ENCODE measurements at regions of chr6 and their contacts with region 1.

Region 1: GRCh38 chr6:70436320-70436719 is 23.0 kb downstream of the FAM135A start:
- DNase-seq: no peak
- ATAC-seq: no peak
- H3K4me3 ChIP-seq: no peak overlapping the region
- H3K27ac ChIP-seq: no peak overlapping the region
- H3K4me1 ChIP-seq: no peaks in the 10 kb centered on the region
- H3K27me3 ChIP-seq: no peaks in the 10 kb centered on the region
- CTCF ChIP-seq: no peak
- POLR2A ChIP-seq: no peak

Region 2: GRCh38 chr6:70241991-70242420 is 194.3 kb before region 1 on chr6:
- intact Hi-C with region 1: no loop called
- DNase-seq: no peak
- ATAC-seq: peak in 1 of 4 donors; percentile 37
- H3K4me3 ChIP-seq: no peak overlapping the region
- H3K27ac ChIP-seq: no peak overlapping the region
- H3K4me1 ChIP-seq: no peaks in the 10 kb centered on the region
- H3K27me3 ChIP-seq: peaks cover 0 to 4% (median 0%) of the 10 kb centered on the region in 9 donors
- CTCF ChIP-seq: no peak
- POLR2A ChIP-seq: no peak

Region 3: GRCh38 chr6:70474751-70475150 is 38.4 kb after region 1 on chr6:
- intact Hi-C with region 1: loop called in 1 of 10 experiments (anchors 2 kb)
- DNase-seq: no peak
- ATAC-seq: no peak
- H3K4me3 ChIP-seq: no peak overlapping the region
- H3K27ac ChIP-seq: no peak overlapping the region
- H3K4me1 ChIP-seq: peaks cover 0 to 2% (median 0%) of the 10 kb centered on the region in 12 donors
- H3K27me3 ChIP-seq: no peaks in the 10 kb centered on the region
- CTCF ChIP-seq: no peak
- POLR2A ChIP-seq: no peak

Region 4: GRCh38 chr6:71621918-71622519 is 1185.7 kb after region 1 on chr6:
- intact Hi-C with region 1: no loop called
- DNase-seq: no peak
- ATAC-seq: no peak
- H3K4me3 ChIP-seq: no peak overlapping the region
- H3K27ac ChIP-seq: no peak overlapping the region
- H3K4me1 ChIP-seq: no peaks in the 10 kb centered on the region
- H3K27me3 ChIP-seq: no peaks in the 10 kb centered on the region
- CTCF ChIP-seq: peak in 9 of 12 donors; percentile 12 to 52 (median 28)
- POLR2A ChIP-seq: no peak

Measured in heart left ventricle (tissue), 16 donors.